GM18951 (cell line): ENCODE measurements at regions of chr7 and their contacts with region 1.

Region 1: GRCh38 chr7:121366852-121367431 is 29.2 kb downstream of the FAM3C start:
- POLR2A ChIP-seq: no peak

Region 2: DNA sequence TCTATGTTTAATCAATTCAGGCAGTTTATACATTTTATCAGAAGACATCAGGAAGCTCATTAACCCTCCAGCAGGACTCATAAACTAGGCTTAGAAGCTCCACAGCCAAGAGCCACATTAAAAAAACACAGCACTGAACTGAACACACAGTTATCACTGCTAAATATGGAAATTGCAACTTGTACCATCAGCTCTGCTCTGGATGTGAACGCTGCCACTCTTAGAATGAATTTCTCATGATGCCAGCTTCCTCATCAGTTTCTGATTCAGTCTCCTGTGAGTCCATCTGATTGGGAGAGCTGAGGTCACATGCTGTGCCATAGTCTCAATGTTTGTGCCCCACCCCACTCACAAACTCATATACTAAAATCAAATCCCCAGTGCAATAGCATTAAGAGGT is 433.5 kb before region 1 on chr7:
- in situ Hi-C with region 1: no loop called
- POLR2A ChIP-seq: no peak

Region 3: DNA sequence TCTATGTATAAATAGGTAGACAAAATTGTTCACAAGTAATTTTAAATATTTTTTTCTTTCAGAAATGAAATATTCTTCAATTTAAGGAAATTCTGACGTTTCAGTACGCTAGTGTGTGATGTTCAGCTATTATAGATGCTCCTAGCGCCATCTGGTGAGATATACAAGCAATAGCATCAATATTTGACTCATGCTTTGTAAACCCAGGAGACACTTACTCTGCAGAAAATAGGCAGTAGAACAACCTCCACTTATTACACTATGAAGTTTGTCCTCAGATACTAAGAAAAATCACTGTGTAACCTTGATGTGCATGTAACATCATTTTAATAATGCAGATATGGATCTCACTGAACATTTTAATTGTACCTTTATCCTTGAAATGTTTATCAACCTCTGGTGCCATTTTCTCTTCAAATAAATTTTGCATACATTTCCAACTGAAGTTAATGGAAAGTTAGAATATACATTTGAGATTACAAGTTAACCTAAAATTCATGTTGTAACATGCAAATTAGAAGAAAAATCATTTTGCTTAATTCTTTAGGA is 180.7 kb after region 1 on chr7:
- in situ Hi-C with region 1: loop called (anchors 5 kb)
- POLR2A ChIP-seq: no peak

Region 4: DNA sequence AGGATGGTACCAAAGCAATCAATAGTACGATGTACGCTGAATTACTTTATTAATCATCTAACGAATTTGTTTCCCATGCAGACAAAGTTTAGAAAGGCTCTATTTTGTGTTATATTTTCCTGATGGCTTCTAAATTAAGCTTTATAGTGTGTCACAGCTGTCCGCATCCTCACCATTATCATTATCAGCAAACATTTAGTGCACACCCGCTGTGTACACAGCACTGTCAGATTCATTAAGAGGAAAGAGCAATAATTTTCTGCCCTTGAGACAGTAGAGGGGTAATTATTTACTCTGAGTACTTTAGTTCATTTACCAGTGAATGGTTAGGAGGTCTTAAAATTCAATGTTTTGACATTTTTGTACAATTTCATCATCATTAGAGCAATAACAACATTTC is 272.8 kb after region 1 on chr7:
- in situ Hi-C with region 1: no loop called
- POLR2A ChIP-seq: no peak